ENCODE measurements at regions of chr1 and their contacts with region 1.

Region 1: DNA sequence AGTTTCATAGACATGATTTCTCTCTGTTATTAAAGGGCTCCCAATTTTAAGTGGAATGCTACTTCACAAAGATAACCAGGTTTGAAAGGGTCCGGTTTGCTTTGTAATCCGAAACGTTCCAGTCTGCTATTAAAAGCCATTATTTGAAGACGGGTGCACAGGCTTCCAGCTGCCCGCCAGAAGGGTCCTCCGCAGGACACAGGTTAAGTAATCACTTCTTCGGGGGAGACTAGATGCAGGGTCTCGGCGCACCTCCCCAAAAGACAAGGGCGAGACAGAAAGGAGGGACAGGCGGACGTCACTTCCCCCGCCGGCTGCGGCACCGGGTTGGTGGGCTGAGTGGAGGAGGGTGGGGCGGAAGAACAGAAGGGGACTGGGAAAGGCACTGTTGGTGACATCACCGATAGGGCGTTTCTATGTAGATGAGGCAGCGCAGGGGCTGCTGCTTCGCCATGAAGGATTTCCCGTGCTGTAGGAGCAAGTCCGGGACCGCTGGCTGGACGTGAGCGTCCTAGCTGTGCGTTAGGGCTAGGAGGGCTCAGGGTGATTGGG is 8.9 kb downstream of the RNU1-2 start:
- DNase-seq: peak; percentile 99
- ATAC-seq: peak; percentile 97 to 99 (median 98)
- H3K4me3 ChIP-seq: peak overlapping the region; percentile 81
- H3K27ac ChIP-seq: peak overlapping the region; percentile 100
- H3K4me1 ChIP-seq: peaks cover 10% of the 10 kb centered on the region
- H3K27me3 ChIP-seq: no peaks in the 10 kb centered on the region
- CTCF ChIP-seq: no peak

Region 2: GRCh38 chr1:16521288-16521583 is 383.4 kb before region 1 on chr1:
- intact Hi-C with region 1: loop called in 1 of 2 experiments (anchors 10 kb)
- DNase-seq: no peak
- ATAC-seq: no peak
- H3K4me3 ChIP-seq: no peak overlapping the region
- H3K27ac ChIP-seq: no peak overlapping the region
- H3K4me1 ChIP-seq: peaks cover 3% of the 10 kb centered on the region
- H3K27me3 ChIP-seq: peaks cover 0 to 17% (median 5%) of the 10 kb centered on the region in 3 donors
- CTCF ChIP-seq: no peak

Region 3: DNA sequence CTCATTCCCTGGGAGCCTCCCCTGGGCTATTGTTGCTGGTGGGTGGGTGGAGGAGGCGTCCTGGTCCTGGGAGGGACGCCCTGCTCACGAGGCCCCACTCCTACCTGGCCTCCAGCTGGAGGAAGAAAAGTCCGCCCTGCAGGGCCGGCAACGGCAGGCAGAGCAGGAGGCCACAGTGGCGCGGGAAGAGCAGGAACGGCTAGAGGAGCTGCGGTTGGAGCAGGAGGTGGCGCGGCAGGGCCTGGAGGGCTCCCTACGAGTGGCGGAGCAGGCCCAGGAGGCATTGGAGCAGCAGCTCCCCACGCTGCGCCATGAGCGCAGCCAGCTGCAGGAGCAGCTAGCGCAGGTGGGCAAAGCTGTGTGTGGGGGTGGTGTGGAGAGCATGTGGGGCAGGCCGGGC is 42.0 kb after region 1 on chr1:
- intact Hi-C with region 1: no loop called
- DNase-seq: peak in 1 of 2 donors; percentile 58
- ATAC-seq: no peak
- H3K4me3 ChIP-seq: no peak overlapping the region
- H3K27ac ChIP-seq: no peak overlapping the region
- H3K4me1 ChIP-seq: no peaks in the 10 kb centered on the region
- H3K27me3 ChIP-seq: no peaks in the 10 kb centered on the region
- CTCF ChIP-seq: no peak

Region 4: GRCh38 chr1:17011439-17012307 is 107.0 kb after region 1 on chr1 and contains the start of gene ATP13A2:
- intact Hi-C with region 1: no loop called
- DNase-seq: peak; percentile 82 to 87
- ATAC-seq: peak; percentile 93 to 96 (median 94)
- H3K4me3 ChIP-seq: peak within 1 kb of the TSS; percentile 97
- H3K27ac ChIP-seq: peak within 1 kb of the TSS; percentile 46
- H3K4me1 ChIP-seq: peaks cover 11% of the 10 kb centered on the region
- H3K27me3 ChIP-seq: no peaks in the 10 kb centered on the region
- CTCF ChIP-seq: no peak
- total RNA-seq, gene ATP13A2: 13.9 to 30.6 (median 22.6) TPM

Measured in psoas muscle (tissue), 8 donors.